CD14-positive monocyte (primary cell): ENCODE measurements at regions of chr20 and their contacts with region 1.

Region 1: GRCh38 chr20:46132705-46133120 is 14.6 kb downstream of the CD40 start:
- DNase-seq: peak; percentile 44 to 58 (median 45)
- H3K4me3 ChIP-seq: no peak overlapping the region
- H3K4me3 Mint-ChIP-seq: no peak overlapping the region
- H3K27ac ChIP-seq: no peak overlapping the region
- H3K27ac Mint-ChIP-seq: no peak overlapping the region
- H3K4me1 ChIP-seq: no peaks in the 10 kb centered on the region
- H3K4me1 Mint-ChIP-seq: peaks cover 4% of the 10 kb centered on the region
- H3K27me3 ChIP-seq: peaks cover 0 to 7% of the 10 kb centered on the region in 2 donors
- H3K27me3 Mint-ChIP-seq: peaks cover 27 to 42% (median 31%) of the 10 kb centered on the region in 3 donors
- CTCF ChIP-seq: peak; percentile 78

Region 2: DNA sequence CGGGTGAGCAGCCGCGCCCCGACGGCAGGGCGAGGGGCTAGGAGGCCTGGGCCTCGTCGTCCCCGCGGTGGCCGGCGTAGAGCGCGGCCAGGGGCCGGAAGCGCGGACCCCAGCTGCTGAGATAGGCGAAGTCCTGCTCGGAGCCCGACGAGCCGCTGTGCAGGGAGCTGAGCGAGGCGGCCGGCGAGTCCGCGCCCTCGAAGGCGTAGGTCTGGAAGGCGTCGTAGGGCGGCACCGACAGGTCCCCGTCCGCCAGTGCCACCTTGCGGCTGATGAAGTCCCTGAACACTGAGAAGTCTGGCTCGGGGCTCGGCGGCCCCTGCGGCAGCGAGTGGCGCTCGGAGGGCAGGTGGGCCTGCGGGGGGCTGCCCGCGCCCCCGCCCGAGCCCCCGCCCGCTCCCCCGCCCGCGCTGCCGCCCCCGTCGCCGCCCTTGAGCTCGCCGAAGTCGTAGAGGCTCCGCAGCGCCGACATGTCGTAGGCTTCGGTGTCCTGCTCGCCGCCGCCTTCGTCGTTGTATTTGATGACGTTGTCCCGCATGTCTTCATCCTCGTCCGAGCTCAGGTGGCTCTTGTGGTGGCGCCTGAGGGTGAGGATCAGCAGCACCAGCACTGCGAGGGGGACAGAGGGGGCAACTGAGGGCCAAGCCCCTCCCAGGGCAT is 41.9 kb after region 1 on chr20:
- intact Hi-C with region 1: no loop called
- DNase-seq: peak; percentile 63 to 74 (median 72)
- H3K4me3 ChIP-seq: no peak overlapping the region
- H3K4me3 Mint-ChIP-seq: peak overlapping the region; percentile 50 to 74
- H3K27ac ChIP-seq: no peak overlapping the region
- H3K27ac Mint-ChIP-seq: no peak overlapping the region
- H3K4me1 ChIP-seq: no peaks in the 10 kb centered on the region
- H3K4me1 Mint-ChIP-seq: peaks cover 7% of the 10 kb centered on the region
- H3K27me3 ChIP-seq: peaks cover 28 to 45% of the 10 kb centered on the region in 2 donors
- H3K27me3 Mint-ChIP-seq: peaks cover 44 to 73% (median 68%) of the 10 kb centered on the region in 3 donors
- CTCF ChIP-seq: peak; percentile 85

Region 3: GRCh38 chr20:46283426-46284039 is 150.8 kb after region 1 on chr20:
- intact Hi-C with region 1: no loop called
- DNase-seq: no peak
- H3K4me3 ChIP-seq: no peak overlapping the region
- H3K4me3 Mint-ChIP-seq: peak overlapping the region in 1 of 2 donors; percentile 44
- H3K27ac ChIP-seq: no peak overlapping the region
- H3K27ac Mint-ChIP-seq: no peak overlapping the region
- H3K4me1 ChIP-seq: no peaks in the 10 kb centered on the region
- H3K4me1 Mint-ChIP-seq: peaks cover 3% of the 10 kb centered on the region
- H3K27me3 ChIP-seq: peaks cover 0 to 16% of the 10 kb centered on the region in 2 donors
- H3K27me3 Mint-ChIP-seq: peaks cover 10 to 26% (median 20%) of the 10 kb centered on the region in 3 donors
- CTCF ChIP-seq: no peak

Region 4: DNA sequence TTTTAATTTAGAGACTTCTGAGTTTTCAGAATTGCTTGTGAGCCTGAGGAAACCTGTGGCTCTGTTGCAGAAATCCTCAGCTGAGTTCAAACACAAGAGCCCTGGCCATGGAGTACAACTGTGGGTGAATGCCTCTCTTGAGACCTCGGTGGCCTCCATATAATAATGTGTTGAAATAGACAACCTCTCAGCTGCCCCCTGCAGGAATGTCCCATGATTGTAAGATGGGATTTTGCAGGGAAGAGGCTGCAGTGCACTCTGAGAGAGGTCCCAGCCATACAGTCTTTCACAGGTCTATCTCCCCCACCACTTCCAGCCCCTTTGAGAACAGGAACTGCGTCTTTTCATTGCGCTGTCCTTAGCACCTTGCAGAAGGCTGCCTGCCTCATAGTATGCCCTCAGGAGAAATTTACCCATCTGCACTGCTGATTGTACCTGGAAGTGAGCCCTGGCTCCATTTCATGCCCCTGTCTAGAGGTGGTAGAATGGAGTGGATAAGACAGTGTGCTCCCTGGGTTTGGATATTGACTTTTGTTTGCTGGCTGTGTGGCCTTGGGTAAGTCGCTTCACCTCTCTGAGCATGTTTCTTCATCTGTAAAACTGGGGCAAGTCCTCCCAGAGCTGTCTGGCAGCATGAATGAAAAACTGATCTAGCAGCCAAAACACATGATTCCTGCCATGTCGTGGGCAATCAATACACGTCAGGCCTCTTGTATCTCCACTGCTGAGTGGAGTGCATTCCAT is 192.4 kb after region 1 on chr20:
- intact Hi-C with region 1: loop called in 1 of 2 experiments (anchors 5 kb)
- DNase-seq: peak in 1 of 3 donors; percentile 22
- H3K4me3 ChIP-seq: no peak overlapping the region
- H3K4me3 Mint-ChIP-seq: no peak overlapping the region
- H3K27ac ChIP-seq: no peak overlapping the region
- H3K27ac Mint-ChIP-seq: peak overlapping the region in 1 of 7 donors; percentile 58
- H3K4me1 ChIP-seq: no peaks in the 10 kb centered on the region
- H3K4me1 Mint-ChIP-seq: no peaks in the 10 kb centered on the region
- H3K27me3 ChIP-seq: no peaks in the 10 kb centered on the region
- H3K27me3 Mint-ChIP-seq: peaks cover 7 to 15% (median 10%) of the 10 kb centered on the region in 3 donors
- CTCF ChIP-seq: peak; percentile 41

Region 5: GRCh38 chr20:46349035-46349741 is 216.5 kb after region 1 on chr20:
- intact Hi-C with region 1: loop called (anchors 2 to 5 kb)
- DNase-seq: peak; percentile 21 to 46 (median 44)
- H3K4me3 ChIP-seq: no peak overlapping the region
- H3K4me3 Mint-ChIP-seq: no peak overlapping the region
- H3K27ac ChIP-seq: no peak overlapping the region
- H3K27ac Mint-ChIP-seq: peak overlapping the region in 1 of 7 donors; percentile 57
- H3K4me1 ChIP-seq: peaks cover 17 to 24% of the 10 kb centered on the region in 2 donors
- H3K4me1 Mint-ChIP-seq: peaks cover 22% of the 10 kb centered on the region
- H3K27me3 ChIP-seq: peaks cover 0 to 3% of the 10 kb centered on the region in 2 donors
- H3K27me3 Mint-ChIP-seq: peaks cover 3 to 7% (median 4%) of the 10 kb centered on the region in 3 donors
- CTCF ChIP-seq: peak; percentile 82

Region 6: GRCh38 chr20:46689082-46689754 is 556.5 kb after region 1 on chr20 and contains the start of gene TP53RK:
- intact Hi-C with region 1: loop called in 1 of 2 experiments (anchors 10 kb)
- DNase-seq: peak; percentile 96 to 98 (median 98)
- H3K4me3 ChIP-seq: peak within 1 kb of the TSS; percentile 48 to 80 (median 72)
- H3K4me3 Mint-ChIP-seq: peak within 1 kb of the TSS; percentile 90 to 93
- H3K27ac ChIP-seq: peak within 1 kb of the TSS; percentile 73 to 82
- H3K27ac Mint-ChIP-seq: peak within 1 kb of the TSS; percentile 88 to 95 (median 94)
- H3K4me1 ChIP-seq: peaks cover 19 to 30% of the 10 kb centered on the region in 2 donors
- H3K4me1 Mint-ChIP-seq: peaks cover 47% of the 10 kb centered on the region
- H3K27me3 ChIP-seq: no peaks in the 10 kb centered on the region
- H3K27me3 Mint-ChIP-seq: no peaks in the 10 kb centered on the region
- CTCF ChIP-seq: peak; percentile 29
- polyA plus RNA-seq, gene TP53RK: 1.4 to 10.9 (median 9.5) TPM